HepG2 (cell line): ENCODE measurements at regions of chr7 and their contacts with region 1.

Region 1: DNA sequence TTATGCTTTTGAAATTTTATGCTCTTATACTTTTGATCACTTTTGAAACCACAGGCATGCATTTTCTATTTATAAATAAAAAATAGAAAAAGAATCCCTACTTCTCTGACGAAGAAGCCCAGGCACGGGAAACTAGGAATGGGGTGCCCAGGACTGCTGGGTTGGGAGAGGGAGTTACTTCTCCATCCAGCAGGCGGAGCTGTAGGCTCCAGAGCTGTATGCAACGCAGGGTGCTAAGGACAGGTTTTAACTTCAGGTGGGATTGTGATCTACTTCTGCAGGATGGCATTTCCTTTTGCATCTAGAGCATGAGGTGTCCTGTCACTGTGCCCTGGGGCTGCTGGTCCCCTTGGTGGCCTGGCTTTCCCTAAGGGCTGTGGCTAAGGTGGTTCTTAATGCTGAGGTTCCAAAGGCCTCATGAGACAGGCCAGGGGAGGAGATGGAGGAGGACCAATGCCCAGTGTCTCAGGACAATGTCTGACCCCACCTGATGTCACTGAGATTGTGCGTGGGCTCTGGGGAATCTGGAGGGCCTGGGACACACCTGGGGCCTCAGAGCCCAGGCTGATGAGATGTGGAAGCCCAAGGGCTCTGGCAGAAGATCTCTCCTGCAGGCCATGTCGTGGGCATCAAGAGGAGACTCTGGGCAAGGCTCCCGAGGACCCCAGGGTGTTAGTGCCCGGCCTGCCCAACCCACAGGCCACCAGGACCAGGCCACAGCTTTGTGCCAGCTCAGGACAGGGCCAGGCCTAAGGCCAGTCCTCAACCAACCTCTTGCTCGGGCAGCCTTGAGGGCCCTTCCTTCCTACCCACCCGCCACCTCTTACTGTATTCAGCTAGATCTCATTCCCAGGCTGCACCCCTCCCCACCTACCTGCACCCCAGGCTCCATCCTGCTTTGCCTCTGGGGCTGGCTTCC is 507 bp downstream of the CCDC201 start:
- DNase-seq: peak; percentile 57
- ATAC-seq: peak; percentile 97
- H3K4me3 ChIP-seq: peak overlapping the region in 1 of 3 experiments; percentile 33; a peak in 2 of 6 replicates
- H3K27ac ChIP-seq: no peak overlapping the region
- H3K4me1 ChIP-seq: peaks cover 73% of the 10 kb centered on the region
- H3K27me3 ChIP-seq: no peaks in the 10 kb centered on the region
- CTCF ChIP-seq: peak; percentile 89
- EP300 ChIP-seq: no peak
- POLR2A ChIP-seq: no peak
- RAD21 ChIP-seq: peak; percentile 72

Region 2: GRCh38 chr7:45726883-45727282 is 145.5 kb before region 1 on chr7:
- CTCF ChIA-PET with region 1: no interaction called
- POLR2A ChIA-PET with region 1: no interaction called
- in situ Hi-C with region 1: no loop called
- intact Hi-C with region 1: no loop called
- DNase-seq: no peak
- ATAC-seq: no peak
- H3K4me3 ChIP-seq: no peak overlapping the region
- H3K27ac ChIP-seq: no peak overlapping the region
- H3K4me1 ChIP-seq: no peaks in the 10 kb centered on the region
- H3K27me3 ChIP-seq: no peaks in the 10 kb centered on the region
- CTCF ChIP-seq: no peak
- EP300 ChIP-seq: no peak
- POLR2A ChIP-seq: no peak
- RAD21 ChIP-seq: no peak

Region 3: GRCh38 chr7:45890902-45891461 is 18.6 kb after region 1 on chr7:
- CTCF ChIA-PET with region 1: interaction called, 11 read pairs
- POLR2A ChIA-PET with region 1: interaction called, 117 read pairs
- in situ Hi-C with region 1: no loop called
- intact Hi-C with region 1: no loop called
- DNase-seq: peak; percentile 36
- ATAC-seq: no peak
- H3K4me3 ChIP-seq: peak overlapping the region; percentile 61 to 89 (median 84)
- H3K27ac ChIP-seq: peak overlapping the region; percentile 99
- H3K4me1 ChIP-seq: peaks cover 67% of the 10 kb centered on the region
- H3K27me3 ChIP-seq: no peaks in the 10 kb centered on the region; a peak in 1 of 5 replicates
- CTCF ChIP-seq: peak; percentile 46
- EP300 ChIP-seq: no peak
- POLR2A ChIP-seq: peak in 1 of 2 experiments; percentile 28; a peak in 1 of 4 replicates
- RAD21 ChIP-seq: 0 out of 2 replicates have a peak, but pooled peaks have one; percentile 10

Region 4: DNA sequence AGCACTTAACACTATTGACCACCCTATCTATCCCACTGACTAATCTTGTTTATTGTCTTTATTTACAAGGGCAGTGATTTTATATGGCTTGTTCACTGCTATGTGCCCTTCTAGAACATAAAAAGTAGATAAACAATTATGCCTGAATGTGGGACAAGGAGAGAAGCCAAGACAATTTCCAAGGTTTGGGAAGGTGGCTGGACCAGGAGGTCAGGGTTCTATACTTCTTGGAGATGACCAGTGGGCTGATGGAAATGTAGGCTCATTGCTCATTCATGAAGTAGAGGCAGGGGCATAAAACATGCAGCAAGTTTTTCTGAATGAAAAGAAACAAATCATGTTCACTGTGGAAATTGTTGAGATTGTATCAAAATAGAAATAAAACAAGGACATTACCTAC is 37.2 kb after region 1 on chr7:
- CTCF ChIA-PET with region 1: no interaction called
- POLR2A ChIA-PET with region 1: no interaction called
- in situ Hi-C with region 1: no loop called
- intact Hi-C with region 1: loop called (anchors 5 kb)
- DNase-seq: no peak
- ATAC-seq: no peak
- H3K4me3 ChIP-seq: no peak overlapping the region
- H3K27ac ChIP-seq: no peak overlapping the region
- H3K4me1 ChIP-seq: peaks cover 5% of the 10 kb centered on the region; the same call in 1 of the 2 replicates
- H3K27me3 ChIP-seq: no peaks in the 10 kb centered on the region
- CTCF ChIP-seq: no peak
- EP300 ChIP-seq: no peak
- POLR2A ChIP-seq: no peak
- RAD21 ChIP-seq: no peak

Region 5: GRCh38 chr7:45972629-45973312 is 100.4 kb after region 1 on chr7:
- CTCF ChIA-PET with region 1: no interaction called
- POLR2A ChIA-PET with region 1: no interaction called
- in situ Hi-C with region 1: no loop called
- intact Hi-C with region 1: no loop called
- DNase-seq: peak; percentile 88
- ATAC-seq: peak; percentile 32
- H3K4me3 ChIP-seq: peak overlapping the region in 1 of 3 experiments; percentile 17; a peak in 1 of 6 replicates
- H3K27ac ChIP-seq: peak overlapping the region; percentile 74
- H3K4me1 ChIP-seq: peaks cover 69% of the 10 kb centered on the region
- H3K27me3 ChIP-seq: no peaks in the 10 kb centered on the region
- CTCF ChIP-seq: 0 out of 2 replicates have a peak, but pooled peaks have one; percentile 5
- EP300 ChIP-seq: peak in 1 of 2 experiments; percentile 80; a peak in 2 of 4 replicates
- POLR2A ChIP-seq: no peak
- RAD21 ChIP-seq: no peak

Region 6: DNA sequence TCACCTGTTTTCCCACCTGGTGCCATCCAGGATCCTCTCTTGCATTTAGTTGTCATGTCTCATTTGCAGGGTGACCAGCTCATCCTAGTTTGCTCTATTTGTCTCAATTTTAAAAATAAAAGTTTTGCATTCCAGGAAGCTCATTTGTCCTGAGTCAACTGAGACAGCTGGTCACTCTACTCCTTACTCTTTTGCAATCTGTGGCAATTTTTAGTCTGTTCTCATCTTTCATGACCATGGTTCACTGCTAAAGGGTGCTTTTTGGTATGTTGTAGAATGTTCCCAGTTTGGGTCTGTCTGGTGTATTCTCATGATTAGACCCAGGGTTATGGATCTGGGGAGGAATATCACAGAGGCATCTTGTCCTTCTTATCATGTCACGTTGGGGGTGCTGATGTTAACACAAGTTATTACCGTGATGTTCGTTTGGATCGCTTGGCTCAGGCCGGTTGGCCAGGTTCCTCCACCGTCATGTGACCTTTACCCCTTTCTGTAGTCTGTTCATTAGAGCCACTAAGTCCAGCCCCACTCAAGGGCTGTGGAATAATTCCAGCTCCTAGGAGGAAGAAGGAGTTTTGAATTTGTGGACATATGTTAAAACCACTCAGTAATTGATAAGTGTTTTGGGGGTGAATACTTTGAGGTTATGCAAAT is 152.0 kb after region 1 on chr7:
- CTCF ChIA-PET with region 1: no interaction called
- POLR2A ChIA-PET with region 1: no interaction called
- in situ Hi-C with region 1: no loop called
- intact Hi-C with region 1: no loop called
- DNase-seq: no peak
- ATAC-seq: no peak
- H3K4me3 ChIP-seq: no peak overlapping the region
- H3K27ac ChIP-seq: no peak overlapping the region
- H3K4me1 ChIP-seq: no peaks in the 10 kb centered on the region
- H3K27me3 ChIP-seq: no peaks in the 10 kb centered on the region
- CTCF ChIP-seq: no peak
- EP300 ChIP-seq: no peak
- POLR2A ChIP-seq: no peak
- RAD21 ChIP-seq: no peak